Lower leg skin (tissue), 4 donors: ENCODE measurements at regions of chr12 and their contacts with region 1.

Region 1: DNA sequence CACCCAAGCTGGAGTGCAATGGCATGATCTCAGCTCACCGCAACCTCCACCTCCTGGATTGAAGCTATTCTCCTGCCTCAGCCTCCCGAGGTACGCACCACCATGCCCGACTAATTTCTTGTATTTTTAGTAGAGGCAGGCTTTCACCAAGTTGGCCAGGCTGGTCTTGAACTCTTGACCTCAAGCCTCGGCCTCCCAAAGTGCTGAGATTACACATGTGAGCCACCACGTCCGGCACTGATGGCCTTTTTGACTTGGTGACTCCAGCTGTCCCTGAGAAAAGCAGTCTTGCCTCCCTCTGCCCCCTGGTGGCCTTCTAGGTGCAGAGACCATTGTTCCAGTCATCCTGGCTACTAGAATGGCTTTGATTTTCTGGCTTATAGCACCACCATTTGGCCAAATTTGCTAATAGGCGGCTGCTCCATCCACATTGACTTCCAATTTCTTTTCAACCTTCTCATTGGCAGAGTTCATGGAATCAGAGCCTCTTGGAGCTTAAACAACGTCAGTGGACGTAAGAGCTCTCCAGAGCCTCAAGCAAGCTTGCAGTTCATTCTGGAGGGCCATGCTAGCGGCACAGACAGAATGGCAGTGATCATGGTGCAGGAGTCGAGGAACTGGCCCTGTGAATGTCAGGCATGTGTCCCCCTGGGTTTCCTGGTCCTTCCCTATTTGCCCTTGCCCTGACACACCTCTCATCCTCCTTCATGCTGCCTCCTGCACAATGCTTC is 25.4 kb upstream of the EIF4B start:
- DNase-seq: peak; percentile 89 to 96
- H3K4me3 ChIP-seq: no peak overlapping the region
- CTCF ChIP-seq: peak in 1 of 3 donors; percentile 98
- POLR2A ChIP-seq: no peak

Region 2: GRCh38 chr12:52884526-52885293 is 96.1 kb before region 1 on chr12:
- intact Hi-C with region 1: loop called (anchors 2 kb)
- DNase-seq: peak; percentile 61 to 95
- H3K4me3 ChIP-seq: no peak overlapping the region
- CTCF ChIP-seq: peak in 1 of 3 donors; percentile 85
- POLR2A ChIP-seq: no peak